ENCODE measurements at regions of chr3 and their contacts with region 1.

Region 1: DNA sequence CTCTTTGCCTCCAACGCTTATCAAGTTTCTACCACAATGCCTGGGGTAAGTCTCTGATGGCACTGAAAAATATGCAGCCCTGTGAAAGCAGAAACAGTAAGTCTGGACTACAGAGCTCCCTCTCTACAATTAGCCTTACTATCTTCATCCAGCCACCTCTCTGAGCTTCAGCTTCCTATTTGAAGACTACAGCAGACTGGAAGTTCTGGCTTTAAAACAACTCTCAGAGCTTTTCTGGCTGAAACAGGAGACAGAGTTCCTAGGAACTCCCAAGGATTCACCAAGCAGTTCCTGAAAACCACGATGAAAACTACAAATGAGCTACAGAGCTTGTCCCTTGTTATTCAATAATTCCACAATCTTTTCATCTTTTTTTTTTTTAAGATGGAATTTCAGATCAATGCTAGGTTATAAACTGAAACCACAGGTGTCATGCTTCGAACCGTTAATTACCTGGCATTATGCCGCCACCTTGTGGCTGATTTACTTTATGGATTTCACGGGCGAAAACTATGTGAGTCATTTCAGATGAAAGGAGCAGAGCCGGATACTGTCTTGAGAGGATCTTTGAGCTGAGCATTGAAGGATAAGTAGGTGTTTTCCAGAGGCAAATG is 3.9 kb downstream of the CRYGS start:
- DNase-seq: peak; percentile 72
- ATAC-seq: peak; percentile 93
- H3K4me3 ChIP-seq: no peak overlapping the region
- H3K27ac ChIP-seq: no peak overlapping the region
- H3K4me1 ChIP-seq: no peaks in the 10 kb centered on the region
- H3K27me3 ChIP-seq: no peaks in the 10 kb centered on the region
- CTCF ChIP-seq: peak; percentile 83

Region 2: DNA sequence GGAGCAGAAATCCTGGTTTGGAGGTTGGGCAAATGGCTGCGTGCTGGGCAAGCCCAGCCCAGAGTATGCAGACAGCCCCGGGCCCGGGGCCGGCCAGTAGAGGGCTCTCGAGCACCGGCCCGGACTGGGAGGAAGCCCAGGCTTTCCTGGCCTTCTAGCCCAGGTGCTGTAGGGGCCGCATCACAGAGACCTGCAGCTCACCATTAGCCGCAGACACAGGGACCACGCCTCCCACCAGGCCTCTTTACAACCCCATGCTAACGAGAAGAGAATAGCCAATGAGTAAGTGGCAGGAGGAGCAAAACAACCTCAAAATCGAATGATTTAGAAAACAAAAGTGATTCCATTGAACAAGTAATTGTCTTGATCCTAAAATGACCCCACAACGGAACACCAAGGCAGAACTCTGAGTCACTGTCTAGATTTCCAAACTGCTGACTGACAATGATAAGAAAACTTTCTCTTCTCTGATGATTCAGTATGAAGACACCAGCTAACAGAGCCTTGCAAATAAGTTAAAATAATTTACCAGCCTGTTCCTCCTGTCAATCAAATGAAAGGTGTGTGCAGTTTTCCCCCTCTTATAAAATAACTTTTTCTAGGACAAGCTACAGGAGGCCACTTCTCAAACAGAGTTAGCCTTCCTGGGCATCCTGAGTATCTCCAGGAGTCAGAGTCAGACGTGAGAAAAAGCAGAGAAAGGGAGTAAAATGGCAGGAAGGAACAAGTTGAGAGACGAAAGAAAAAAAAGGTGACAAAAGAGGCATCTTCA is 280.5 kb before region 1 on chr3:
- CTCF ChIA-PET with region 1: interaction called, 13 read pairs
- POLR2A ChIA-PET with region 1: interaction called, 6 read pairs
- in situ Hi-C with region 1: no loop called
- intact Hi-C with region 1: loop called (anchors 1 kb)
- DNase-seq: no peak
- ATAC-seq: peak; percentile 99
- H3K4me3 ChIP-seq: no peak overlapping the region
- H3K27ac ChIP-seq: no peak overlapping the region
- H3K4me1 ChIP-seq: no peaks in the 10 kb centered on the region
- H3K27me3 ChIP-seq: peaks cover 2% of the 10 kb centered on the region; the same call in 1 of the 2 replicates
- CTCF ChIP-seq: peak; percentile 99

Measured in Panc1 (cell line).